ENCODE measurements at regions of chr4 and their contacts with region 1.

Region 1: DNA sequence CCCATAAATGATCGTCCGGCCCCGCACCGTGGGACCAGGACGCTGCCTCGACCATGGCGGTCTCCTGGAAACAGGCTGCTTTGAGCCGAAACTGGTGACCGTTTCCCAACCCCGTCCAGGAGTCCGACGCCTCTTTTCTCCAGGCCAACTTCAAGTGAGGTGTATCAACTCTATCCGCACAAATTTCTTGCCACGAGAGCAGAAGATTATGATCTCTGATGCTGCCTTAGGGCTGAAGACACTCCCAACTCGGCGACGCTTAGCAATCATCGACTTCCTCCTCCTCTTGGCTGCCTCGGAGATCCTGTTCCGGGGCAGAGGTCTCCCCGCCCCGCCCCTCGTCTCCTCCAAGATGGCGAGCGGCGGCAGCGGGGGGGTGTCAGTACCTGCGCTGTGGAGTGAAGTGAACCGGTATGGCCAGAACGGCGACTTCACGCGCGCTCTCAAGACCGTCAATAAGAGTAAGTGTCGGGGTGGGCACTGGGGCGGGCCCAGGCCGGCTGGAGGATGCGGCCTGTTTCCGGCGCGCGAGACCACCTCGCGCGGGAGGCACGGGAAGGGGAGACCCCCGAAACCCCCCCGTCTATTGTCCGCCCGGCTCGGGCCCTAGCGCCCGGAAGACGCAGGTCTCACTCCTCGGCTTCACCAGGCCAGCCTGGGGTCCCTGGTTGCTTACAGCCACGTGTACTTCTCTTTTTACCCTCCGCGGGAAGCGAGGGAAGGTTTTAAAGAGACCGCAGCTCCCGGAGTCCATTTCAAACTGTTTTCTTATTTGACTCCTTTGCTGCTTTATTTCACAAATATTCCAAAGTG is at the start of gene SRP72:
- DNase-seq: peak; percentile 85 to 88
- ATAC-seq: peak; percentile 97 to 99 (median 98)
- H3K4me3 ChIP-seq: peak within 1 kb of the TSS; percentile 83 to 99 (median 91)
- H3K27ac ChIP-seq: peak within 1 kb of the TSS; percentile 49 to 93 (median 88)
- H3K4me1 ChIP-seq: peaks cover 5 to 47% (median 38%) of the 10 kb centered on the region in 9 donors
- H3K27me3 ChIP-seq: no peaks in the 10 kb centered on the region
- CTCF ChIP-seq: no peak
- total RNA-seq, gene SRP72: 36.7 to 54.5 (median 41.8) TPM

Region 2: GRCh38 chr4:56048702-56049431 is 418.6 kb before region 1 on chr4:
- intact Hi-C with region 1: no loop called
- DNase-seq: peak in 1 of 2 donors; percentile 35
- ATAC-seq: peak; percentile 58 to 93 (median 72)
- H3K4me3 ChIP-seq: peak overlapping the region; percentile 16 to 64 (median 56)
- H3K27ac ChIP-seq: no peak overlapping the region
- H3K4me1 ChIP-seq: peaks cover 0 to 13% (median 7%) of the 10 kb centered on the region in 9 donors
- H3K27me3 ChIP-seq: peaks cover 0 to 73% (median 54%) of the 10 kb centered on the region in 7 donors
- CTCF ChIP-seq: peak in 3 of 9 donors; percentile 27 to 47 (median 35)

Region 3: DNA sequence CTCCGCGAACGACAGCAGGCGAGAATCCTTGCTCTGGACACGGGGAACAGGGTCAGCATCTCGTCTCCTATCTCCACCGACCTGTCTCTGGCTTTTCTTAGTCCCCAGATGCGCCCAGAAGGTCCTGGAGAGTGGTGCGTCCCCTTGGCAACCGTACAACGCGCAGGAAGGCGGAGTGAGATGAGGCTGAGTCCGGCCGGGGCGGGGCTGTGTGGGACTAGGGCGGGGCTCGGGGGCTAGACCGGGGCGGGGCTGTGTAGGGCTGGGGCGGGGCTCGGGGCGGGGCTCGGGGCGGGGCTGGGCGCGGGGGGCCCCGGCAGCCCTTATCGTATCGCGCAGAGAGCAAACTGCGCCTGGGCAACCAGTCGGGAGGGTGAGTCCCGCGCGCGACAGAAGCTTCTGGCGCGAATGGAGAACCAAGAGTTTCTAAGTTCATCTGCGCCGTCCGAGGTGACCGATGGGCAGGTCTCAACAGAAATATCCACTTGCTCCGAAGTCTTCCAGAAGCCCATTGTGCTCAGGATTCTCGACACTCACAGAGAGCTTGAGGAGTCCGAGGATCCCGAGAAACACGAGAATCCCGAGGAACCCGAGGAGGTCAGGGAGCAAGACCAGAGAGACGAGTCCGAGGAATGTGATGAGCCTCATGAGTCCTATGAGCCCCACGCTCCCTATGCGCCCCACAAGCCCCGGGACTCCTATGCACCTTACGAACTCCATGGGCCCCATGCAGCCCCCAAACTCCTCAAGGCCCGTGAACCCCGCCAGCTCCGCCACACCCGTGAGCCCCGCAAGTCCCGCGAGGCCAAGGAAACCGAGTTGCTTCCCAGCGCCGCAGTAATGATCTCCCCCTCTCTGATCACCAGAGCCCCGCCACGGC is 63.0 kb after region 1 on chr4:
- intact Hi-C with region 1: loop called in 1 of 10 experiments (anchors 2 kb)
- DNase-seq: peak; percentile 83 to 88
- ATAC-seq: peak; percentile 97 to 99 (median 98)
- H3K4me3 ChIP-seq: peak overlapping the region; percentile 39 to 71 (median 58)
- H3K27ac ChIP-seq: no peak overlapping the region
- H3K4me1 ChIP-seq: peaks cover 0 to 15% (median 8%) of the 10 kb centered on the region in 9 donors
- H3K27me3 ChIP-seq: peaks cover 0 to 44% (median 17%) of the 10 kb centered on the region in 7 donors
- CTCF ChIP-seq: no peak

Region 4: DNA sequence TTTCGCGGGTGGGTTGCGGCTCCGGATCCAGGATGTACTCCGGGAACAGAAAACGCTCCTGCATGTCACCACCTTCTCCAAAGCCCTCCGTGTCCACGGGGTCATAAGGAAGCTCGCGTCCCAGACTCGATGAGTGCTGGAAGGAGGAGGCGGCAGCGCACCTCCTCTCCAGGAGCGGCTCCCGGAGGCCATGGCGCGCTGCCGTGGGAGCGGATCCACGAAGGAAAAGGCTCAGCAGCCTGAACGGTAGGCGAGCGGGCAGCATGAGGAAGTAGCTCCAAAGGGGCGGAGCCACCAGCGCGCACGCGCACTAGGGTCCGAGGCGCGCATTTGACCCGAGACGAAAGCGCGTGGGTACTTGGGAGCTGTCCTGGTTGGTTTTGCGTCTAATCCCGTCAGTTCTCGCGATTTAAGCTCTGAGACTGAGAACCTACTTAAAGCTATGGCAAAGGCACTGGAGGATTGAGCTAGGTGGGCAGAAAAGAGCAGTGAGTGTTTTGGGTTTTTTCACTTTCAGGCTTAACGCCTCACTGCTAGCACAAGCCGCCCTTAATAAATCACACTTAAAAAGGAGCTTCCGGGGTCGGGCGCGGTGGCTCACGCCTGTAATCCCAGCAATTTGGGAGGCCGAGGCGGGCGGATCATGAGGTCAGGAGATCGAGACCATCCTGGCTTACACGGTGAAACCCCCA is 510.0 kb after region 1 on chr4 and contains the start of gene NOA1:
- intact Hi-C with region 1: loop called in 1 of 10 experiments (anchors 10 kb)
- DNase-seq: peak; percentile 98
- ATAC-seq: peak; percentile 91 to 95 (median 93)
- H3K4me3 ChIP-seq: peak within 1 kb of the TSS; percentile 69 to 98 (median 83)
- H3K27ac ChIP-seq: peak within 1 kb of the TSS; percentile 68 to 94 (median 89)
- H3K4me1 ChIP-seq: peaks cover 0 to 63% (median 53%) of the 10 kb centered on the region in 9 donors
- H3K27me3 ChIP-seq: no peaks in the 10 kb centered on the region
- CTCF ChIP-seq: no peak
- total RNA-seq, gene NOA1: 11.0 to 14.7 (median 12.6) TPM

Measured in heart right ventricle (tissue), 16 donors.